CD8-positive, alpha-beta T cell (primary cell): ENCODE measurements at regions of chr20 and their contacts with region 1.

Region 1: DNA sequence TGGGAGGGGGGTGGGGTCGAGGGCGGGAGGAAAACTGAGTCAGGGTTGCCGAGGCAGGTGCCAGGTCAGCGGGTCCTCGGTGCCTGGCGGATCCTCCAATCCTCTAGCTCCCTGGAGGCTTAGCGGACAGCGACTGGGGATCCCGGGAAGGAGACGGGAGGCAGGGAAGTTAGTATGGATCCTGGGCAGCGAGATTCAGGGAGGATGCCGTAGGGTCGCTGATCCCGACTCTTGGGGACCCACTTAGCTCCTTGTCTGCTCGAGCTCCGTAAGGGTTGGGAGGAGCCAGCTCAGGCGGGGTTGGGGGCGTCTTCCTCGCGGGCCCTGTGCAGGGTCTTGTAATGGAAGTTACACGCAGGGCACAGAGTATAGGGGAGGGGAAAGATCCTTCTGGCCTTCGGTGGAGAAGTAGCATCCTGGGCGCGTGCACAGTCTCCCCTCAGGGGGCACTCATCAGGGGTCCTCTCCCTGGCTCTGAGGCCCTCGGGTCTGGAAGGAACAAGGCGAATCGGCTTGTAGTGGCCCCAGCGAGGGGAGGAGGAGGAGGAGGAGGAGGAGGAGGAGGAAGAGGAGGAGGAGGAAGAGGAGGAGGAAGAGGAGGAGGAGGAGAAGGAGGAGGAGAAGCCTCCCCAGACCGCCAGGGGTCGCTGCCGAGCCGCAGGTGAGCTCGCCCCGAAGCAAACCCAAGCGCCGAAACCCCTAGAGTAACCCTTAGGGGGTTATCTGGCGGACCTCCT is 6.4 kb upstream of the SLC12A5 start:
- DNase-seq: peak; percentile 47 to 89 (median 79)
- ATAC-seq: peak; percentile 62
- H3K4me3 ChIP-seq: peak overlapping the region; percentile 22 to 42
- H3K4me3 Mint-ChIP-seq: peak overlapping the region; percentile 76
- H3K27ac ChIP-seq: no peak overlapping the region
- H3K27ac Mint-ChIP-seq: no peak overlapping the region
- H3K4me1 ChIP-seq: peaks cover 14% of the 10 kb centered on the region
- H3K4me1 Mint-ChIP-seq: peaks cover 20% of the 10 kb centered on the region
- H3K27me3 ChIP-seq: peaks cover 17 to 18% of the 10 kb centered on the region in 2 experiments
- H3K27me3 Mint-ChIP-seq: peaks cover 63% of the 10 kb centered on the region
- CTCF ChIP-seq: peak; percentile 58

Region 2: DNA sequence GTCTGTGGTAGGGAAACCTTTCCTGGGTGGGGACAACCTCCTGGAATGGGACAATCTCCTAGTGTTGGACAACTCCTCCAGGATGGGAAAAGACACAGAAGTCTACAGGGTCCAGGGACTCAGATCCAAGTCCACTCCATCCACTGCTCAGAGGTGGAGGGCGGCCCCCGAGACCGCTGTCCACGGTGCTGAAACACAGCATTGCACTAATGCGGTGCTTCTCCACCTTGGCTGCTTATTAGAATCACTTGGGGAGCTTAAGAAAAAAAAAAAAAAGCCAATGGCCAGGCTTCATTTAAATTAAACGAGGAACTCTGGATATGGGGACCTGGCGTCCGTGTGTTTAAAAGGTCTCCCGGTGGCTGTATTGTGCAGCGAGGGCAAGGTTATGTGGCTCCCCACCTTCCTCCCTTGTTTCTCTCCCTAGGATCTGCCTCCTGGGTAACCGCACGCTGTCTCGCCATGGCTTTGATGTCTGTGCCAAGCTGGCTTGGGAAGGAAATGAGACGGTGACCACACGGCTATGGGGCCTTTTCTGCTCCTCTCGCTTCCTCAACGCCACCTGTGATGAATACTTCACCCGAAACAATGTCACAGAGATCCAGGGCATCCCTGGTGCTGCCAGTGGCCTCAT is 18.4 kb after region 1 on chr20:
- CTCF ChIA-PET with region 1: interaction called, 7 read pairs
- POLR2A ChIA-PET with region 1: no interaction called
- intact Hi-C with region 1: loop called in 1 of 2 experiments (anchors 1 kb)
- DNase-seq: peak in 8 of 9 experiments; percentile 10 to 55 (median 45)
- ATAC-seq: peak; percentile 62
- H3K4me3 ChIP-seq: no peak overlapping the region
- H3K4me3 Mint-ChIP-seq: no peak overlapping the region
- H3K27ac ChIP-seq: no peak overlapping the region
- H3K27ac Mint-ChIP-seq: no peak overlapping the region
- H3K4me1 ChIP-seq: no peaks in the 10 kb centered on the region
- H3K4me1 Mint-ChIP-seq: no peaks in the 10 kb centered on the region
- H3K27me3 ChIP-seq: peaks cover 0 to 4% of the 10 kb centered on the region in 2 experiments
- H3K27me3 Mint-ChIP-seq: peaks cover 40% of the 10 kb centered on the region
- CTCF ChIP-seq: no peak

Region 3: DNA sequence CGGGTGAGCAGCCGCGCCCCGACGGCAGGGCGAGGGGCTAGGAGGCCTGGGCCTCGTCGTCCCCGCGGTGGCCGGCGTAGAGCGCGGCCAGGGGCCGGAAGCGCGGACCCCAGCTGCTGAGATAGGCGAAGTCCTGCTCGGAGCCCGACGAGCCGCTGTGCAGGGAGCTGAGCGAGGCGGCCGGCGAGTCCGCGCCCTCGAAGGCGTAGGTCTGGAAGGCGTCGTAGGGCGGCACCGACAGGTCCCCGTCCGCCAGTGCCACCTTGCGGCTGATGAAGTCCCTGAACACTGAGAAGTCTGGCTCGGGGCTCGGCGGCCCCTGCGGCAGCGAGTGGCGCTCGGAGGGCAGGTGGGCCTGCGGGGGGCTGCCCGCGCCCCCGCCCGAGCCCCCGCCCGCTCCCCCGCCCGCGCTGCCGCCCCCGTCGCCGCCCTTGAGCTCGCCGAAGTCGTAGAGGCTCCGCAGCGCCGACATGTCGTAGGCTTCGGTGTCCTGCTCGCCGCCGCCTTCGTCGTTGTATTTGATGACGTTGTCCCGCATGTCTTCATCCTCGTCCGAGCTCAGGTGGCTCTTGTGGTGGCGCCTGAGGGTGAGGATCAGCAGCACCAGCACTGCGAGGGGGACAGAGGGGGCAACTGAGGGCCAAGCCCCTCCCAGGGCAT is 152.0 kb after region 1 on chr20:
- CTCF ChIA-PET with region 1: interaction called, 53 read pairs
- POLR2A ChIA-PET with region 1: no interaction called
- intact Hi-C with region 1: loop called in 1 of 2 experiments (anchors 1 kb)
- DNase-seq: peak; percentile 42 to 78 (median 72)
- ATAC-seq: peak; percentile 91
- H3K4me3 ChIP-seq: no peak overlapping the region
- H3K4me3 Mint-ChIP-seq: no peak overlapping the region
- H3K27ac ChIP-seq: no peak overlapping the region
- H3K27ac Mint-ChIP-seq: no peak overlapping the region
- H3K4me1 ChIP-seq: no peaks in the 10 kb centered on the region
- H3K4me1 Mint-ChIP-seq: peaks cover 4% of the 10 kb centered on the region
- H3K27me3 ChIP-seq: peaks cover 7 to 16% of the 10 kb centered on the region in 2 experiments
- H3K27me3 Mint-ChIP-seq: peaks cover 64% of the 10 kb centered on the region
- CTCF ChIP-seq: peak; percentile 57

Region 4: DNA sequence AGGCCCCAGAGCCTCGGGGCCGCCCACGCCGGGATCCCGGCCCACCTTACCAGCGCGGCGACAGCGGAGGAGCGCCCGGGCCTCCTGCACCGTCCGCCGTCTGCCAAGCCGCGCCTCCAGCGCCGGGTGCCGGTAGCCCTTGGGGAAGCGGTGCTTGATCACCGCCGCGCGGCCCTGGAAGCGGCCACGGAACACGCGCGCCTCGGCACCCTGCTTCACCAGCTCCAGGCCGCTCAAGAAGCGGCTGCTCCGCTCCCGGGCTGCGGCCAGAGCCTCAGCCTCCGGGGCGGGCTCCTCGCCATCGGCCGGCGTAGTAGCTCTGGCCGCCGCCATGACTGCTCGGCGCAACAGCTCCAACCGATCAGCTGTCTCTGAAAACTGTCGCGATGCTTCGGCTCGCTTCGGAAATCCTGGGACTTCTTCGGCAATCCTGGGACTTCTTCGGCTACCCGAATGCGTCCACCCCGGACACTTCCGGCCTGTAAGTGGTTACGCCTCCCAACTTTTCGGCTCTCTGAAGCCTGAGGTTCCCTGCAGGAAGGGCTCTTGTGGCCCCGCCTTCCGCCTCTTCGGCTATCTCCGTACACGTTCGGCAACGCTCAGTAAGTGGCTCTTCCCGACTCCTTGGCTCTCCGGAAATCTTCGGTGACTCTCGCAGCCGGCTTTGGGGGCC is 666.6 kb after region 1 on chr20 and contains the start of gene TP53RK:
- CTCF ChIA-PET with region 1: no interaction called
- POLR2A ChIA-PET with region 1: no interaction called
- intact Hi-C with region 1: loop called (anchors 2 to 5 kb)
- DNase-seq: peak; percentile 89 to 99 (median 96)
- ATAC-seq: peak; percentile 96
- H3K4me3 ChIP-seq: peak within 1 kb of the TSS; percentile 92 to 96
- H3K4me3 Mint-ChIP-seq: peak within 1 kb of the TSS; percentile 100
- H3K27ac ChIP-seq: peak within 1 kb of the TSS; percentile 74 to 83
- H3K27ac Mint-ChIP-seq: peak within 1 kb of the TSS; percentile 99
- H3K4me1 ChIP-seq: peaks cover 42% of the 10 kb centered on the region
- H3K4me1 Mint-ChIP-seq: peaks cover 57% of the 10 kb centered on the region
- H3K27me3 ChIP-seq: no peaks in the 10 kb centered on the region
- H3K27me3 Mint-ChIP-seq: no peaks in the 10 kb centered on the region
- CTCF ChIP-seq: no peak
- total RNA-seq, gene TP53RK: 5.4 TPM